Endothelial cell of umbilical vein (primary cell): ENCODE measurements at regions of chr21 and their contacts with region 1.

Region 1: GRCh38 chr21:33360881-33361602 is 36.3 kb downstream of the IFNAR1 start:
- DNase-seq: peak; percentile 77
- H3K4me3 ChIP-seq: no peak overlapping the region
- H3K27ac ChIP-seq: no peak overlapping the region
- H3K4me1 ChIP-seq: peaks cover 16% of the 10 kb centered on the region
- H3K27me3 ChIP-seq: no peaks in the 10 kb centered on the region
- CTCF ChIP-seq: peak; percentile 82 to 91
- POLR2A ChIP-seq: no peak

Region 2: GRCh38 chr21:33324291-33325221 is 36.5 kb before region 1 on chr21 and contains the start of gene IFNAR1:
- CTCF ChIA-PET with region 1: interaction called, 29 read pairs
- POLR2A ChIA-PET with region 1: interaction called, 5 read pairs
- dilution Hi-C with region 1: no loop called
- intact Hi-C with region 1: loop called (anchors 1 kb)
- DNase-seq: peak; percentile 98
- H3K4me3 ChIP-seq: peak within 1 kb of the TSS; percentile 50 to 73 (median 65)
- H3K27ac ChIP-seq: peak within 1 kb of the TSS; percentile 46
- H3K4me1 ChIP-seq: peaks cover 11% of the 10 kb centered on the region
- H3K27me3 ChIP-seq: no peaks in the 10 kb centered on the region
- CTCF ChIP-seq: no peak
- POLR2A ChIP-seq: peak; percentile 93
- total RNA-seq, gene IFNAR1: 44.6 and 47.8 TPM in 2 replicates

Region 3: GRCh38 chr21:33348706-33349105 is 12.3 kb before region 1 on chr21:
- CTCF ChIA-PET with region 1: interaction called, 63 read pairs
- POLR2A ChIA-PET with region 1: no interaction called
- dilution Hi-C with region 1: no loop called
- intact Hi-C with region 1: no loop called
- DNase-seq: peak; percentile 81
- H3K4me3 ChIP-seq: no peak overlapping the region
- H3K27ac ChIP-seq: peak overlapping the region; percentile 43
- H3K4me1 ChIP-seq: peaks cover 8% of the 10 kb centered on the region
- H3K27me3 ChIP-seq: no peaks in the 10 kb centered on the region
- CTCF ChIP-seq: no peak
- POLR2A ChIP-seq: no peak

Region 4: DNA sequence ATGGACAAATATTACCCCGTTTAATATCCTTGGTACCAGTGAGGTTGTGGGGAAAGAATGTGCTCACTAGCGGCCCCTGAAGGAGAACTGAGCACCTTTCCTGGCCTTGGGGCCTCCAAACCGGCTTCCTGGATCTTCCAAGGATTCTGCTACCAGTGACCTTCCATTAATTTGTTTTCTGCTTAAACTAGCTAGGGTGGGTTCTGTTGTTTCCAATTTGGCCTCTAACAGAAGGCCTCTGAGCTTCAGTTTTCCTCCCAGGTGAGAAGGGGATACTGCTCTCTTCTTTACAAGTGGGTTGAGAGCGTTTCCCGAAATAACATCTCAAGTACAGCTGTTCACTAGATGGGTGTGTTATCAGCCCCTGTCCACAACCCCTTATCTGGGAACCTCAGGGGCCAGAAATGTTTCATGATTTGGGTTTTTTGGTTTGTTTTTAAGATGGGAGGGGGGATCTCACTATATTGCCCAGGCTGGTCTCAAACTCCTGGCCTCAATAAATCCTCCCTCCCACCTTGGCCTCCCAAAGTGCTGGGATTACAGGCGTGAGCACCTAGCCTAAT is 25.3 kb after region 1 on chr21:
- CTCF ChIA-PET with region 1: interaction called, 21 read pairs
- POLR2A ChIA-PET with region 1: no interaction called
- dilution Hi-C with region 1: no loop called
- intact Hi-C with region 1: no loop called
- DNase-seq: no peak
- H3K4me3 ChIP-seq: no peak overlapping the region
- H3K27ac ChIP-seq: no peak overlapping the region
- H3K4me1 ChIP-seq: peaks cover 16% of the 10 kb centered on the region
- H3K27me3 ChIP-seq: no peaks in the 10 kb centered on the region
- CTCF ChIP-seq: peak; percentile 12 to 31
- POLR2A ChIP-seq: no peak

Region 5: GRCh38 chr21:33434770-33435360 is 73.8 kb after region 1 on chr21:
- CTCF ChIA-PET with region 1: interaction called, 15 read pairs
- POLR2A ChIA-PET with region 1: no interaction called
- dilution Hi-C with region 1: no loop called
- intact Hi-C with region 1: no loop called
- DNase-seq: peak; percentile 92
- H3K4me3 ChIP-seq: no peak overlapping the region
- H3K27ac ChIP-seq: peak overlapping the region; percentile 58
- H3K4me1 ChIP-seq: peaks cover 15% of the 10 kb centered on the region
- H3K27me3 ChIP-seq: no peaks in the 10 kb centered on the region
- CTCF ChIP-seq: no peak
- POLR2A ChIP-seq: no peak

Region 6: GRCh38 chr21:35084869-35085268 is 1723.8 kb after region 1 on chr21:
- CTCF ChIA-PET with region 1: no interaction called
- POLR2A ChIA-PET with region 1: no interaction called
- dilution Hi-C with region 1: no loop called
- intact Hi-C with region 1: no loop called
- DNase-seq: peak; percentile 73
- H3K4me3 ChIP-seq: no peak overlapping the region
- H3K27ac ChIP-seq: peak overlapping the region; percentile 77
- H3K4me1 ChIP-seq: peaks cover 25% of the 10 kb centered on the region
- H3K27me3 ChIP-seq: no peaks in the 10 kb centered on the region
- CTCF ChIP-seq: no peak
- POLR2A ChIP-seq: no peak